ENCODE measurements at regions of chr4 and their contacts with region 1.

Region 1: GRCh38 chr4:39977489-39978377 is at the start of gene PDS5A:
- DNase-seq: peak; percentile 85
- H3K4me3 ChIP-seq: peak within 1 kb of the TSS; percentile 89 to 93
- H3K27ac ChIP-seq: peak within 1 kb of the TSS; percentile 97 to 98
- H3K4me1 ChIP-seq: no peaks in the 10 kb centered on the region
- H3K27me3 ChIP-seq: no peaks in the 10 kb centered on the region
- CTCF ChIP-seq: peak; percentile 78 to 98 (median 93)
- POLR2A ChIP-seq: peak; percentile 17
- total RNA-seq, gene PDS5A: 55.7 to 57.0 TPM

Region 2: DNA sequence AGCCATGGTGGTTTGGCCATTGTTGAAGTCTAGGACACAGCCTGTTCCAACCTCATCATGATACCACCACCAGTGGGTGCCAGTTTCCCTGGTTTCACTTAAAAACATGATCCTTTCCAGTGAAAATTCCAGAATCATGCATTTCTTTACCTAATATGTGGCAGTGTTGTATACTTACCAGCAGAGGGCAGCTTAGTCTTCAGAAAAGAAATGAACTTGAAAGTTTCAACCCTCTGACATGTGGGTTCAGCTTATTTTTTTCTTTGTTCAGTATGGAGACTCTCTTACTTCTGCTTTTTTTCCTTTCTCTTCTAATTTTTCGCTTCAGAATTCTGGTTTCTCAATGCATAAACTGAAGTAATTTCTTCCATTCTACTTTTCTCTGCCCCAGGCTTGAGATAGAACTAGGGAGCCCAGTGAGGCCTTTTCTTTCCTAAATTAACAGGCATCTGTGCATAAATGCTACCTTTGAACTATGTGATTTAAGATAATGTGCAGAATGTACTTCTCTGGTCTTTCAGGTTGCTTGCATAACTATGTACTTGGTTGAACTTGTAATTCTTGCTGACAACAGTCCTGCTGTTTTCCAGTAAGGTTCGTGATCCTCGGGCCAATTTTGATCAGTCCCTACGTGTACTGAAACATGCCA is 508.2 kb before region 1 on chr4:
- intact Hi-C with region 1: loop called (anchors 2 kb)
- DNase-seq: peak; percentile 31
- H3K4me3 ChIP-seq: no peak overlapping the region
- H3K27ac ChIP-seq: peak overlapping the region; percentile 4 to 59
- H3K4me1 ChIP-seq: no peaks in the 10 kb centered on the region
- H3K27me3 ChIP-seq: no peaks in the 10 kb centered on the region
- CTCF ChIP-seq: peak; percentile 65 to 89 (median 81)
- POLR2A ChIP-seq: no peak

Region 3: GRCh38 chr4:39527273-39528060 is 450.3 kb before region 1 on chr4 and contains the start of gene UGDH:
- intact Hi-C with region 1: loop called (anchors 2 kb)
- DNase-seq: peak; percentile 98
- H3K4me3 ChIP-seq: peak within 1 kb of the TSS; percentile 66 to 89
- H3K27ac ChIP-seq: peak within 1 kb of the TSS; percentile 95 to 97
- H3K4me1 ChIP-seq: peaks cover 5% of the 10 kb centered on the region
- H3K27me3 ChIP-seq: no peaks in the 10 kb centered on the region
- CTCF ChIP-seq: peak in 2 of 4 experiments; percentile 4 to 30
- POLR2A ChIP-seq: peak; percentile 97
- total RNA-seq, gene UGDH: 59.0 to 147 TPM

Region 4: GRCh38 chr4:39638354-39639240 is 339.1 kb before region 1 on chr4 and contains the start of gene SMIM14:
- intact Hi-C with region 1: loop called (anchors 5 kb)
- DNase-seq: peak; percentile 96
- H3K4me3 ChIP-seq: peak within 1 kb of the TSS; percentile 88 to 99
- H3K27ac ChIP-seq: peak within 1 kb of the TSS; percentile 99
- H3K4me1 ChIP-seq: peaks cover 12% of the 10 kb centered on the region
- H3K27me3 ChIP-seq: no peaks in the 10 kb centered on the region
- CTCF ChIP-seq: peak in 2 of 4 experiments; percentile 52 to 70
- POLR2A ChIP-seq: peak; percentile 97
- total RNA-seq, gene SMIM14: 36.1 to 101 TPM

Region 5: GRCh38 chr4:39697740-39698423 is 279.9 kb before region 1 on chr4 and contains the start of gene UBE2K:
- intact Hi-C with region 1: loop called (anchors 1 kb)
- DNase-seq: peak; percentile 75
- H3K4me3 ChIP-seq: peak within 1 kb of the TSS; percentile 76 to 93
- H3K27ac ChIP-seq: peak within 1 kb of the TSS; percentile 95
- H3K4me1 ChIP-seq: no peaks in the 10 kb centered on the region
- H3K27me3 ChIP-seq: no peaks in the 10 kb centered on the region
- CTCF ChIP-seq: peak in 2 of 4 experiments; percentile 16 to 25
- POLR2A ChIP-seq: peak; percentile 79
- total RNA-seq, gene UBE2K: 25.6 to 30.3 TPM

Region 6: GRCh38 chr4:39846120-39846519 is 131.6 kb before region 1 on chr4:
- intact Hi-C with region 1: loop called (anchors 10 kb)
- DNase-seq: no peak
- H3K4me3 ChIP-seq: no peak overlapping the region
- H3K27ac ChIP-seq: no peak overlapping the region
- H3K4me1 ChIP-seq: no peaks in the 10 kb centered on the region
- H3K27me3 ChIP-seq: no peaks in the 10 kb centered on the region
- CTCF ChIP-seq: no peak
- POLR2A ChIP-seq: no peak

Region 7: GRCh38 chr4:40056716-40057585 is 79.2 kb after region 1 on chr4 and contains the start of gene N4BP2:
- intact Hi-C with region 1: loop called (anchors 2 kb)
- DNase-seq: peak; percentile 78
- H3K4me3 ChIP-seq: peak within 1 kb of the TSS; percentile 87 to 91
- H3K27ac ChIP-seq: peak within 1 kb of the TSS; percentile 99 to 100
- H3K4me1 ChIP-seq: peaks cover 4% of the 10 kb centered on the region
- H3K27me3 ChIP-seq: no peaks in the 10 kb centered on the region
- CTCF ChIP-seq: peak; percentile 80 to 96 (median 87)
- POLR2A ChIP-seq: peak; percentile 85
- total RNA-seq, gene N4BP2: 8.7 to 14.7 TPM

Region 8: GRCh38 chr4:40114206-40114605 is 136.5 kb after region 1 on chr4:
- intact Hi-C with region 1: no loop called
- DNase-seq: no peak
- H3K4me3 ChIP-seq: no peak overlapping the region
- H3K27ac ChIP-seq: no peak overlapping the region
- H3K4me1 ChIP-seq: no peaks in the 10 kb centered on the region
- H3K27me3 ChIP-seq: no peaks in the 10 kb centered on the region
- CTCF ChIP-seq: no peak
- POLR2A ChIP-seq: no peak

Region 9: DNA sequence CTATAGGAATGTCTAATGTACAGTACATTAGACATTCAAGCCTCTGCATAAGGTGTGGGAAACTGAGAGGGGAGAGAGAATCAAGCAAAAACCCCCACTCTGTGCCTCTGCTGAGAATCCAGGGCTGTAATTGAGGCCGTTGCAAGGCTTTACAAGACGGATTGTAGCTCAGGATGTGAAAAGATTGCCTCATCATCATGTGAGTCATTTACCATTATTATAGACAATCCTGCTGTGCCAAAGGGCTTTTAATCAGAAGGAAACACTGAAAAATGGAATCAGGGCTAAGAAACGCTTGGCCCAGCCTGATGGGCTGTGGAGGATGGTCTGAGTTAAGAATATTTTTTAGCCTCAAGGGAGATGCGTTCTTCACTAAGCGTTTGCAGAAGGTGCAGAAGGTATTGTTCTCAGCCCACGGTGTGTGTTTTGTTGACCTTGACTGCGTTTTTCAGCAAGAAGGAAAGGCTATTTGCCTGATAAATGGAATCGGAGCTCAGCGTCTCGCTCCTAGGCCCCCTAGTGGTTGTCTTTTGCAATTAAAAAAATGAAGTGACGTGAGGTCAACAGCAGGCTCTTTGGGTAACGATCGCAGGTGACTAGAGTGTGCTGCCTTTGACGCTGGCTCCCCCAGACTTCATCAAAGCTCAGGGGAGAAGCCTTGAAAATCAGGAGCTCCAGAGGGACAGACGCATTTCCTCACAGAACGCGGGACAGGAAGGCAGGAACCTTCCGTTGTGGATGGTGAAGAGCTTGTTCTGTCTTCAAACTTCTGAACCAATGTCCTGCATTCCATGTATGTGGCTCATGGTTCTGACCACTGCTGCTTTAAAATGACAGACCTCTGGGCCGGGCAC is 339.3 kb after region 1 on chr4:
- intact Hi-C with region 1: no loop called
- DNase-seq: peak; percentile 34
- H3K4me3 ChIP-seq: peak overlapping the region; percentile 0 to 5
- H3K27ac ChIP-seq: peak overlapping the region; percentile 39 to 65
- H3K4me1 ChIP-seq: no peaks in the 10 kb centered on the region
- H3K27me3 ChIP-seq: no peaks in the 10 kb centered on the region
- CTCF ChIP-seq: peak; percentile 71 to 86 (median 74)
- POLR2A ChIP-seq: no peak